Sigmoid colon (tissue), 7 donors: ENCODE measurements at regions of chr1 and their contacts with region 1.

Region 1: GRCh38 chr1:152623203-152623844 is 421 bp upstream of the LCE3A start:
- DNase-seq: no peak
- H3K4me3 ChIP-seq: no peak overlapping the region
- H3K27ac ChIP-seq: no peak overlapping the region
- H3K4me1 ChIP-seq: no peaks in the 10 kb centered on the region
- H3K27me3 ChIP-seq: peaks cover 0 to 6% (median 0%) of the 10 kb centered on the region in 3 donors
- CTCF ChIP-seq: no peak
- EP300 ChIP-seq: no peak
- POLR2A ChIP-seq: no peak

Region 2: GRCh38 chr1:152582647-152583046 is 40.7 kb before region 1 on chr1:
- intact Hi-C with region 1: loop called (anchors 5 kb)
- DNase-seq: no peak
- H3K4me3 ChIP-seq: no peak overlapping the region
- H3K27ac ChIP-seq: no peak overlapping the region
- H3K4me1 ChIP-seq: no peaks in the 10 kb centered on the region
- H3K27me3 ChIP-seq: no peaks in the 10 kb centered on the region
- CTCF ChIP-seq: no peak
- EP300 ChIP-seq: no peak
- POLR2A ChIP-seq: no peak

Region 3: GRCh38 chr1:152735648-152736047 is 112.3 kb after region 1 on chr1:
- intact Hi-C with region 1: no loop called
- DNase-seq: no peak
- H3K4me3 ChIP-seq: no peak overlapping the region
- H3K27ac ChIP-seq: no peak overlapping the region
- H3K4me1 ChIP-seq: no peaks in the 10 kb centered on the region
- H3K27me3 ChIP-seq: no peaks in the 10 kb centered on the region
- CTCF ChIP-seq: no peak
- EP300 ChIP-seq: no peak
- POLR2A ChIP-seq: no peak

Region 4: DNA sequence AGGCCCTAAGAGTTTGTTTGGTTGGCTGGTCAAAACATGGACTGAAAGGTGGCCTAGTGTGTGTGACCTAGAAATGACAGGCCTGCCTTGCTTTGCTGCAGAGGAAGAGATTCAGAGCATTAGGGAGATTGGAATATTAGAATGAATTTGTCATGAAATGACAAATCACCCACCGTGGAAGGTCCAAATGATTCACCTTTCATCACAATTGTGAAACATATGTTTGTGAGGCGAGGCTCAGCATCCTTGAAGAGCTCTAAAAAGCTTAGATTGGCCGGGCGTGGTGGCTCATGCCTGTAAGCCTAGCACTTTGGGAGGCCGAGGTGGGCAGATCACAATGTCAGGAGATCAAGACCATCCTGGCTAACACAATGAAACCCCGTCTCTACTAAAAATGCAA is 194.0 kb after region 1 on chr1:
- intact Hi-C with region 1: no loop called
- DNase-seq: no peak
- H3K4me3 ChIP-seq: no peak overlapping the region
- H3K27ac ChIP-seq: no peak overlapping the region
- H3K4me1 ChIP-seq: no peaks in the 10 kb centered on the region
- H3K27me3 ChIP-seq: no peaks in the 10 kb centered on the region
- CTCF ChIP-seq: no peak
- EP300 ChIP-seq: no peak
- POLR2A ChIP-seq: no peak